ENCODE measurements at regions of chr10 and their contacts with region 1.

Region 1: GRCh38 chr10:74234569-74234968 is 83.5 kb downstream of the ADK start:
- DNase-seq: peak in 1 of 35 experiments; percentile 14
- ATAC-seq: no peak
- H3K4me3 ChIP-seq: no peak overlapping the region
- H3K4me3 Mint-ChIP-seq: no peak overlapping the region
- H3K27ac ChIP-seq: no peak overlapping the region
- H3K27ac Mint-ChIP-seq: no peak overlapping the region
- H3K4me1 ChIP-seq: no peaks in the 10 kb centered on the region
- H3K4me1 Mint-ChIP-seq: peaks cover 8 to 26% (median 17%) of the 10 kb centered on the region in 3 donors
- H3K27me3 ChIP-seq: no peaks in the 10 kb centered on the region
- H3K27me3 Mint-ChIP-seq: no peaks in the 10 kb centered on the region

Region 2: DNA sequence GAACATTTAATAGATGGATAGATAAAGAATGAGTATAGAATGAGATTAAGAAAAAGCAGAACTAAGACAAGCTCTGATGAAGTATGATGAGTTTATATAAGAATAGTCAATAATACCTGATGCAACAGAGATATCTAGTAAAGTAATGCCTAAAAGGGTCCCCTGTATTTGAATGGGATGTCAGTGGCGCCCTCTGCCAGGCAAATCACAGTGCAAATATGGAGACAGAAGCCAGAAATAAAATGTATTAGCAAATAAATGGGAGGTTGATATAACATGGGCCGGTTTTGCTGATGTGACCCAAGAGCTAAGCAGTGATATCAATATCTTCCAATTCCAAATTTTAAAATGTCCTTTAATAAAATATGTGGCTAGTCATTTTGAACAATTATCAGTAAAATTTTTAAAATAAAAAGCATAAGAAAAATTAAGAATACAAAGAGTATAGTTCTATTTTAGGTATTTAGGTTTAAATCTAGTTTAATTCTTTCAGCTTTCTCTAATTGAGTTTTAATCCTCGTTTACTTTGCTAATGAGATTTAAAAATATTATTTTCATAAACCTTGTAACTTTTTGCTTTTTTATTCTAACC is 20.9 kb before region 1 on chr10:
- CTCF ChIA-PET with region 1: interaction called, 3 to 13 read pairs
- POLR2A ChIA-PET with region 1: no interaction called
- DNase-seq: peak; percentile 27 to 71 (median 52)
- ATAC-seq: peak in 3 of 4 experiments; percentile 41 to 69 (median 50)
- H3K4me3 ChIP-seq: no peak overlapping the region
- H3K4me3 Mint-ChIP-seq: no peak overlapping the region
- H3K27ac ChIP-seq: no peak overlapping the region
- H3K27ac Mint-ChIP-seq: peak overlapping the region in 1 of 2 donors; percentile 34
- H3K4me1 ChIP-seq: no peaks in the 10 kb centered on the region
- H3K4me1 Mint-ChIP-seq: peaks cover 15 to 28% (median 24%) of the 10 kb centered on the region in 3 donors
- H3K27me3 ChIP-seq: no peaks in the 10 kb centered on the region
- H3K27me3 Mint-ChIP-seq: no peaks in the 10 kb centered on the region

Measured in T-cell (primary cell).